Psoas muscle (tissue), 8 donors: ENCODE measurements at regions of chr18 and their contacts with region 1.

Region 1: DNA sequence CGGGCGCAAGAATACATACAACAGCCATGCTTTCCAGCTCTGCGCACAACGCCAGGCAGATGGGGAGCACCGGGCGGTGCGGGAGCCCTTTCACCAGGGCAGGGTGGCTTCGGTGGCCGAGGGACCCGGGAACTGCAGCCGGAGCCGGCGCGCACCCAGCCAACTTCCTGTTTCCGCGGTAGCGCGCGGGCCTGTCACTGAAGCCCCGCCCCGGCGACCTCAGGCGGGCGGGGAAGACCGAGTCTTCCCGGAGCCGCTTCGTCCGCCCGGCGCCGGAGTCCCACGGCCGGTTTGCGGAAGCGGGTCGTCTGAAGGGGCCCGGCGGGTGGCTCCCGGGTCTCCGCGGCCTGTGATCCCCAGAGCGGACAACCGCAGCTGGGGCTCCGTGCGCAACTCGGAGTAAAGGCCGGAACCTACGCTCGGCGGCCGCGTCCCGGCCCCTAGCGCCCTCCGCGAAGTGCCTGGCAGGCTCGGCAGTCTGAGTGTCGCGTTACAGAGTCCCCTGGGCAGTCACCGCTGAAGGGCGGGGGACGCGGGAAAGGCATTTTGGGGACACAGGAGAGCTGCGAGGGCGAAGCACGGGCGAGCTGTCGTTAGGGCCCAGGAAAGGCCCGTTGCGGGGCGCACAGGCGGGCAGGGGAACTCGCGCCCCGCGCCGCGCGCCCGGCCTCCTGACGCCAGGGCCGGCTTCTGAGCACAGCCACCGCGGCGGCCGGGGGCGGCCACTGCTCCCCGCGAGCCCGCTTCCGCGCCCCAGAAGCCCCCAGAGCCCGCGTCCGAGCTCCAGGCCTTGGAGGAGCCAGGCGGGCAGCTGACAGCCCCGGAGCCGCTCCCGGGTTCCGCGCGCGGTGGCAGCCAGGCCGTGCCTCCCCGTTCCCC is at the start of gene MPPE1:
- DNase-seq: peak; percentile 92 to 95
- ATAC-seq: peak; percentile 94 to 96 (median 94)
- H3K4me3 ChIP-seq: peak within 1 kb of the TSS; percentile 88
- H3K27ac ChIP-seq: peak within 1 kb of the TSS; percentile 99
- H3K4me1 ChIP-seq: peaks cover 18% of the 10 kb centered on the region
- H3K27me3 ChIP-seq: no peaks in the 10 kb centered on the region
- CTCF ChIP-seq: no peak
- total RNA-seq, gene MPPE1: 22.5 to 33.4 (median 27.6) TPM

Region 2: GRCh38 chr18:11857177-11857887 is 51.1 kb before region 1 on chr18:
- intact Hi-C with region 1: loop called in 1 of 2 experiments (anchors 5 kb)
- DNase-seq: peak; percentile 85 to 93
- ATAC-seq: peak; percentile 82 to 88 (median 86)
- H3K4me3 ChIP-seq: peak overlapping the region; percentile 91
- H3K27ac ChIP-seq: peak overlapping the region; percentile 98
- H3K4me1 ChIP-seq: peaks cover 18% of the 10 kb centered on the region
- H3K27me3 ChIP-seq: no peaks in the 10 kb centered on the region
- CTCF ChIP-seq: no peak

Region 3: DNA sequence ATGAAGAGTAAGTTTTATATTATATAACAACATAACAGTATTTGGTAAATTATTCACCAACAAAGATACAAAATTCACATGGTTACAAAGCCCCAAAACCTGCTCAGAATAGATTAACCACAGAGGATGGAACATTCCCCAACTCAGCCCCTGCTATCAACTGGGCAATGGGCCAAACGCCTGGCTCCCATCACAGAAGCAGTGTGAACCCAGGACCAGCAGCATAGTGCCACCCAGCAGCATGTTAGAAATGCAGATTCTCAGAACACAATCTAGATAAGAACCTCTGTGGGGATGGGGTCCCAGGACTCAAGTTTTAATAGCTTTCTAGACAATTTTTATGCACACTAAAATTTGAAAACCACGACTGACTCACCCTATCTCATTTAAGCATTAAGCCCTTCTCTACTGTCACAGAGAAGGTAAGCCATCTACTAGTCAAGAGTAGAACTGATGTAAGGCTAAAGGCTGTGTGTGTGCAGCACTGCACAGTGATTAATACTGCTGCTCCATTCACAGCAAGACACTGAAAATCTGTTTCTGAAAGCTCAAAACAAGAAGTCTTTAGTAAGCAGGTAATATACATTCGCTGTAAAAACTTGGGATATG is 453.5 kb after region 1 on chr18:
- intact Hi-C with region 1: no loop called
- DNase-seq: peak in 1 of 2 donors; percentile 50
- ATAC-seq: peak in 2 of 4 donors; percentile 40 to 57
- H3K4me3 ChIP-seq: no peak overlapping the region
- H3K27ac ChIP-seq: peak overlapping the region; percentile 68
- H3K4me1 ChIP-seq: peaks cover 18% of the 10 kb centered on the region
- H3K27me3 ChIP-seq: no peaks in the 10 kb centered on the region
- CTCF ChIP-seq: no peak